Brain microvascular endothelial cell (primary cell): ENCODE measurements at regions of chr12 and their contacts with region 1.

Region 1: DNA sequence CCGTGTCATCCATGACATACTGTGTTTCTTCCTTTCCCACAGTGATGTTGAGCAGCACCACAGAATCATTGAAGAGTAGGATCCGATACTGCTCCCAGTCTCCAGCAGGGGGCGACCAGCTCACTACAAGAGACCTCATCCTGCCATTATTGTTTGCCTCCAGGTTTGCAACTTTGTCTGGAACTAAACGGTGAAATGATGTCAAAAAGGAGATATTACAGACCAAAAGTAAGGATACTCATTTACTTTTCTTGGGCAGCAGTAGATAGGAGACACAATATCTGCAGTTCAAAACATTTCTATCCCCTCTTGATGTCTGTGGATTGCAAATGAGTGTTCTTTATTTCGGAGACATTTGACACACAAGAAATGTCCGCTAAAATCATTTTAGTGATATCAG is 47.2 kb downstream of the PTPRB start:
- DNase-seq: peak; percentile 87
- H3K4me3 ChIP-seq: no peak overlapping the region
- H3K27ac ChIP-seq: no peak overlapping the region
- H3K27me3 ChIP-seq: no peaks in the 10 kb centered on the region
- CTCF ChIP-seq: peak; percentile 96

Region 2: GRCh38 chr12:69879041-69879960 is 710.8 kb before region 1 on chr12:
- in situ Hi-C with region 1: loop called (anchors 25 kb)
- DNase-seq: peak; percentile 75
- H3K4me3 ChIP-seq: peak overlapping the region; percentile 31
- H3K27ac ChIP-seq: no peak overlapping the region
- H3K27me3 ChIP-seq: no peaks in the 10 kb centered on the region
- CTCF ChIP-seq: peak; percentile 93

Region 3: GRCh38 chr12:70367258-70368141 is 222.6 kb before region 1 on chr12:
- in situ Hi-C with region 1: no loop called
- DNase-seq: no peak
- H3K4me3 ChIP-seq: peak overlapping the region; percentile 76
- H3K27ac ChIP-seq: no peak overlapping the region
- H3K27me3 ChIP-seq: no peaks in the 10 kb centered on the region
- CTCF ChIP-seq: no peak

Region 4: DNA sequence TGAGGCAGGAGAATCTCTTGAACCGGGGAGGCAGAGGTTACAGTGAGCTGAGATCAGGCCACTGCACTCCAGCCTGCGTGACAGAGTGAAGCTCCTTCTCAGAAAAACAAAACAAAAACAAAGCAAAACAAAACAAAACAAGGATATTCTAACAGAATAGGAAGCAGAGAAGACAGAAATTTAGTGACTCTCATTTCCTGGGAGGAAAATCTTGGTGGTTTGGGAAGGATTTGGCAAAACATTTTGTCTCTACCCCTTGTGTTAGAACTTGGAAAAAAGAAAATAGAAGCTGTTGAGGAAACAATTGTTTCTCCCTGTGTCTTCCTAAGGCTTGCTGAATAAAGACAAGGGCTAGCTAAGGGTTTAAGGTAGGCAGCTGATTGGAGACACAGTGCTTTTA is 410.2 kb after region 1 on chr12:
- in situ Hi-C with region 1: no loop called
- DNase-seq: no peak
- H3K4me3 ChIP-seq: no peak overlapping the region
- H3K27ac ChIP-seq: no peak overlapping the region
- H3K27me3 ChIP-seq: no peaks in the 10 kb centered on the region
- CTCF ChIP-seq: no peak